ENCODE measurements at regions of chr2 and their contacts with region 1.

Region 1: DNA sequence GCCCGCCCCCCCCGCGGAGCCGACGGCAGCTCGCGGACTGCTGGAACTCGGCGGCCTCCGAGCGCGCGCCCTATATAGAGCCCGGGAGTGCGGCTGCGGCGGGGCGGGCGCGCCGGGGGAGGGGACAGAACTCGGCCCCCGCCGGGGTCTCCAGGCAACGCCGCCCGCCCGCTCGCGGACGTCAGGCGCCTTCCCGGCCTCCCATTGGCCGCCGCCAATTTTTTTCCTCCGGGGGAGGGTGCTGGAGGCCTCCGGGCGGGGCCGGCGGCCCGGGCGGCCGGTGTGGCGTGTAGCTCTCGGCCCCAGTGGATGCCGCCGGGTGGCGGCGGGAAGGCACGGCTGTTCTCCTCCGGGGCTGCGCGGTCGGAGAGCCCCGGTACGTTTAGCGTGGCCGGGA is at the start of gene ZFP36L2:
- DNase-seq: peak; percentile 100
- H3K4me3 ChIP-seq: peak within 1 kb of the TSS; percentile 73 to 99 (median 90)
- H3K27ac ChIP-seq: peak within 1 kb of the TSS; percentile 93 to 100 (median 99)
- H3K4me1 ChIP-seq: peaks cover 24 to 65% (median 59%) of the 10 kb centered on the region in 6 donors
- H3K27me3 ChIP-seq: no peaks in the 10 kb centered on the region
- CTCF ChIP-seq: peak in 3 of 11 experiments; percentile 22 to 39 (median 29)
- POLR2A ChIP-seq: peak; percentile 95 to 98 (median 97)
- total RNA-seq, gene ZFP36L2: 118 to 223 (median 131) TPM

Region 2: DNA sequence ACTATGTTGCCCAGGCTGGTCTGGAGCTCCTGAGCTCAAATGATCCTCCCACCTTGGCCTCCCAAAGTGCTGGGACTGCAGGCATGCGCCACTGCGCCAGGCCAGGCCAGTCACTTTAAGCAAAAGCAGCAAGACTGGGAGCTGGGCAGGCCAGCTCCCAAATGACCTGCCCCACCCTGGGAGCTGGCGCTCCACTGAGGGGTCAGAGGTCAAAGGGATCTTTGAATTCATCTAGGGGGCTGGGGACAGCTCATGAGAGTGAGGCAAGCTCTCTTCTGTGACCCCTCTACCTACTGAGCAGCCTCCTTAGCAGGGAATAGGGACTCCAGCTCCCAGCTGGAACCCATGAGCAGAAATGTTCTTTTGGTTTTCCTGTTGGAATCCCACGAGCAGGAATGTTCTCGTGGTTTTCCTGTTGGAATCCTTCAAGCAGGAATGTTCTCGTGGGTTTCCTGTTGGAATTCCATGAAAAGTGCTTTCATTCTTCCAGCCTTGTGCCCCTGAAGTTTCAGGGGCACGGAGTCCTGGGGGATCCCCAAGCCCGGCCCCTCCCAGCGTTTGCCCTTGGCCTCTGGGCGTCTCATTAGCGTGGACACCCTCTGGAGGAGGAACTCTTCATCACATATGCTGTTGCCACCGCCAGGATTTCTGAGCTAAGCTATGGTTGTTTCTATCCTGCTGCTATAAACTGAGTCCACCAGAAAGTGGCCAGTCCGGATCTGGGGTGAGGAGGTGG is 272.2 kb before region 1 on chr2:
- intact Hi-C with region 1: loop called (anchors 5 kb)
- DNase-seq: no peak
- H3K4me3 ChIP-seq: no peak overlapping the region
- H3K27ac ChIP-seq: peak overlapping the region in 7 of 8 donors; percentile 2 to 69 (median 50)
- H3K4me1 ChIP-seq: peaks cover 0 to 56% (median 37%) of the 10 kb centered on the region in 6 donors
- H3K27me3 ChIP-seq: no peaks in the 10 kb centered on the region
- CTCF ChIP-seq: peak in 1 of 11 experiments; percentile 12
- POLR2A ChIP-seq: no peak

Region 3: GRCh38 chr2:42974721-42975717 is 251.5 kb before region 1 on chr2:
- intact Hi-C with region 1: loop called (anchors 10 kb)
- DNase-seq: peak; percentile 91
- H3K4me3 ChIP-seq: peak overlapping the region in 4 of 8 donors; percentile 9 to 58 (median 31)
- H3K27ac ChIP-seq: peak overlapping the region in 7 of 8 donors; percentile 29 to 80 (median 68)
- H3K4me1 ChIP-seq: peaks cover 4 to 58% (median 30%) of the 10 kb centered on the region in 6 donors
- H3K27me3 ChIP-seq: peaks cover 0 to 6% (median 0%) of the 10 kb centered on the region in 7 donors
- CTCF ChIP-seq: peak; percentile 71 to 94 (median 88)
- POLR2A ChIP-seq: no peak

Region 4: GRCh38 chr2:43123981-43124686 is 102.4 kb before region 1 on chr2:
- intact Hi-C with region 1: no loop called
- DNase-seq: peak; percentile 75
- H3K4me3 ChIP-seq: no peak overlapping the region
- H3K27ac ChIP-seq: peak overlapping the region in 1 of 8 donors; percentile 21
- H3K4me1 ChIP-seq: peaks cover 20 to 73% (median 36%) of the 10 kb centered on the region in 6 donors
- H3K27me3 ChIP-seq: no peaks in the 10 kb centered on the region
- CTCF ChIP-seq: no peak
- POLR2A ChIP-seq: no peak

Measured in spleen (tissue), 13 donors.